Naive thymus-derived CD4-positive, alpha-beta T cell (primary cell): ENCODE measurements at regions of chr6 and their contacts with region 1.

Region 1: GRCh38 chr6:32838114-32838958 is at the start of gene TAP2:
- DNase-seq: peak; percentile 93 to 100 (median 97)
- ATAC-seq: peak; percentile 97
- H3K4me3 ChIP-seq: peak within 1 kb of the TSS; percentile 87
- H3K4me3 Mint-ChIP-seq: peak within 1 kb of the TSS; percentile 85 to 98 (median 93)
- H3K27ac ChIP-seq: peak within 1 kb of the TSS; percentile 97
- H3K27ac Mint-ChIP-seq: peak within 1 kb of the TSS; percentile 89 to 100 (median 99)
- H3K4me1 ChIP-seq: peaks cover 52 to 64% of the 10 kb centered on the region in 2 donors
- H3K4me1 Mint-ChIP-seq: peaks cover 71 to 92% (median 84%) of the 10 kb centered on the region in 7 donors
- H3K27me3 ChIP-seq: no peaks in the 10 kb centered on the region
- H3K27me3 Mint-ChIP-seq: no peaks in the 10 kb centered on the region
- total RNA-seq, gene TAP2: 84.3 to 243 (median 117) TPM

Region 2: DNA sequence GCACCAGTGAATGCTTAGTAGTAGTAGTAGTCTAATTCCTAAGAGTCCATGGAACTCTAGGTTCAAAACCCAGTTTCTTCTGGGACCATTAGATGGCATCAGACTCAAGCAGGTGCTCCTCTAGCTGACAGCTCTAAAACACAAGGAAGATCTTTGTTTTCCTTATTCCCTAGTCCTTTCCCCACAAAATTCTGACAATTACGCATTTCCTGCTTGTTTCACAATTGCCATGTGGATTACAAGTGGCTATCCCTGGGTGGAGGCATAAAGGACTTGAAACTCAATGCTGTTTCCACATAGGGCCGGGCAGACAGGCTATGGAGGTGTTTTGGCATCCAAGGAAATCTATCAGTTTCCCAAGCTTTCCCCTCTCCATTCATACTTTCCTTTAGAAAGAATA is 12.4 kb before region 1 on chr6:
- CTCF ChIA-PET with region 1: interaction called, 18 read pairs
- POLR2A ChIA-PET with region 1: interaction called, 6 read pairs
- intact Hi-C with region 1: no loop called
- DNase-seq: peak in 1 of 9 donors; percentile 14
- ATAC-seq: no peak
- H3K4me3 ChIP-seq: no peak overlapping the region
- H3K4me3 Mint-ChIP-seq: no peak overlapping the region
- H3K27ac ChIP-seq: no peak overlapping the region
- H3K27ac Mint-ChIP-seq: peak overlapping the region in 4 of 9 donors; percentile 13 to 43 (median 30)
- H3K4me1 ChIP-seq: no peaks in the 10 kb centered on the region
- H3K4me1 Mint-ChIP-seq: peaks cover 0 to 40% (median 4%) of the 10 kb centered on the region in 7 donors
- H3K27me3 ChIP-seq: no peaks in the 10 kb centered on the region
- H3K27me3 Mint-ChIP-seq: no peaks in the 10 kb centered on the region

Region 3: GRCh38 chr6:32853541-32854375 is 15.4 kb after region 1 on chr6 and contains the starts of genes PSMB9 and TAP1:
- CTCF ChIA-PET with region 1: interaction called, 241 read pairs
- POLR2A ChIA-PET with region 1: interaction called, 662 read pairs
- intact Hi-C with region 1: loop called (anchors 1 kb)
- DNase-seq: peak; percentile 92 to 97 (median 94)
- ATAC-seq: peak; percentile 92
- H3K4me3 ChIP-seq: peak within 1 kb of the TSS; percentile 91
- H3K4me3 Mint-ChIP-seq: peak within 1 kb of the TSS; percentile 96 to 100 (median 100)
- H3K27ac ChIP-seq: peak within 1 kb of the TSS; percentile 100
- H3K27ac Mint-ChIP-seq: peak within 1 kb of the TSS; percentile 97 to 100 (median 100)
- H3K4me1 ChIP-seq: peaks cover 45 to 57% of the 10 kb centered on the region in 2 donors
- H3K4me1 Mint-ChIP-seq: peaks cover 61 to 80% (median 72%) of the 10 kb centered on the region in 7 donors
- H3K27me3 ChIP-seq: no peaks in the 10 kb centered on the region
- H3K27me3 Mint-ChIP-seq: no peaks in the 10 kb centered on the region
- total RNA-seq, gene PSMB9: 70.3 to 452 (median 90.5) TPM
- total RNA-seq, gene TAP1: 92.1 to 500 (median 103) TPM

Region 4: GRCh38 chr6:32862725-32863124 is 24.4 kb after region 1 on chr6:
- CTCF ChIA-PET with region 1: interaction called, 241 read pairs
- POLR2A ChIA-PET with region 1: interaction called, 662 read pairs
- intact Hi-C with region 1: no loop called
- DNase-seq: no peak
- ATAC-seq: no peak
- H3K4me3 ChIP-seq: no peak overlapping the region
- H3K4me3 Mint-ChIP-seq: no peak overlapping the region
- H3K27ac ChIP-seq: no peak overlapping the region
- H3K27ac Mint-ChIP-seq: peak overlapping the region in 1 of 9 donors; percentile 13
- H3K4me1 ChIP-seq: peaks cover 5 to 14% of the 10 kb centered on the region in 2 donors
- H3K4me1 Mint-ChIP-seq: peaks cover 29 to 57% (median 52%) of the 10 kb centered on the region in 7 donors
- H3K27me3 ChIP-seq: no peaks in the 10 kb centered on the region
- H3K27me3 Mint-ChIP-seq: no peaks in the 10 kb centered on the region

Region 5: GRCh38 chr6:32894080-32895005 is 56.0 kb after region 1 on chr6:
- CTCF ChIA-PET with region 1: interaction called, 3 read pairs
- POLR2A ChIA-PET with region 1: interaction called, 5 read pairs
- intact Hi-C with region 1: loop called in 1 of 2 experiments (anchors 1 kb)
- DNase-seq: peak; percentile 89 to 98 (median 94)
- ATAC-seq: peak; percentile 99
- H3K4me3 ChIP-seq: peak overlapping the region; percentile 81
- H3K4me3 Mint-ChIP-seq: peak overlapping the region; percentile 91 to 100 (median 99)
- H3K27ac ChIP-seq: peak overlapping the region; percentile 78
- H3K27ac Mint-ChIP-seq: peak overlapping the region; percentile 78 to 97 (median 94)
- H3K4me1 ChIP-seq: peaks cover 12 to 13% of the 10 kb centered on the region in 2 donors
- H3K4me1 Mint-ChIP-seq: peaks cover 30 to 43% (median 36%) of the 10 kb centered on the region in 7 donors
- H3K27me3 ChIP-seq: no peaks in the 10 kb centered on the region
- H3K27me3 Mint-ChIP-seq: peaks cover 0 to 4% (median 0%) of the 10 kb centered on the region in 5 donors

Region 6: GRCh38 chr6:32933636-32934085 is 95.3 kb after region 1 on chr6:
- CTCF ChIA-PET with region 1: interaction called, 12 read pairs
- POLR2A ChIA-PET with region 1: no interaction called
- intact Hi-C with region 1: no loop called
- DNase-seq: peak; percentile 47 to 77 (median 67)
- ATAC-seq: peak; percentile 79
- H3K4me3 ChIP-seq: no peak overlapping the region
- H3K4me3 Mint-ChIP-seq: no peak overlapping the region
- H3K27ac ChIP-seq: no peak overlapping the region
- H3K27ac Mint-ChIP-seq: peak overlapping the region in 2 of 9 donors; percentile 32 to 45
- H3K4me1 ChIP-seq: no peaks in the 10 kb centered on the region
- H3K4me1 Mint-ChIP-seq: peaks cover 0 to 24% (median 6%) of the 10 kb centered on the region in 7 donors
- H3K27me3 ChIP-seq: no peaks in the 10 kb centered on the region
- H3K27me3 Mint-ChIP-seq: peaks cover 0 to 35% (median 0%) of the 10 kb centered on the region in 5 donors

Region 7: GRCh38 chr6:32940656-32941213 is 102.4 kb after region 1 on chr6 and contains the start of gene HLA-DMB:
- CTCF ChIA-PET with region 1: interaction called, 6 read pairs
- POLR2A ChIA-PET with region 1: interaction called, 12 read pairs
- intact Hi-C with region 1: no loop called
- DNase-seq: peak in 7 of 9 donors; percentile 64 to 80 (median 74)
- ATAC-seq: peak; percentile 86
- H3K4me3 ChIP-seq: peak within 1 kb of the TSS; percentile 66
- H3K4me3 Mint-ChIP-seq: peak within 1 kb of the TSS; percentile 85 to 97 (median 94)
- H3K27ac ChIP-seq: peak within 1 kb of the TSS; percentile 75
- H3K27ac Mint-ChIP-seq: peak within 1 kb of the TSS; percentile 95 to 98 (median 96)
- H3K4me1 ChIP-seq: peaks cover 50 to 55% of the 10 kb centered on the region in 2 donors
- H3K4me1 Mint-ChIP-seq: peaks cover 55 to 67% (median 62%) of the 10 kb centered on the region in 7 donors
- H3K27me3 ChIP-seq: no peaks in the 10 kb centered on the region
- H3K27me3 Mint-ChIP-seq: peaks cover 0 to 7% (median 0%) of the 10 kb centered on the region in 5 donors
- total RNA-seq, gene HLA-DMB: 7.8 to 82.5 (median 9.1) TPM

Region 8: DNA sequence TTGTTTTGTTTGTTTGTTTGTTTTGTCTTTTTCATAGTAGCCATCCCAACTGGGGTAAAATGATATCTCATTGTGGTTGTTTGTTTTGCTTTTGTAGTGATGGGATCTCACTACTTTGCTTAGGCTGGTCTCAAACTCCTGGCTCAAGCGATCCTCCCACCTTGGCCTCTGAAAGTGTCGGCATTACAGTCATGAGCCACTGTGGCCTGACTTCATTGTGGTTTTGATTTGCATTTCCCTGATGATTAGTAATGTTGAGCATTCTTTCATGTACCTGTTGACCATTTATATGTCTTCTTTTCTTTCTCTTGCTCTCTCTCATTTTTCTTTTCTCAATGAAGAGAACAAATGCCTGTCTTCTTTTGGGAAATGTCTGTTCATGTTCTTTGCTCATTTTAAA is 201.8 kb after region 1 on chr6:
- CTCF ChIA-PET with region 1: no interaction called
- POLR2A ChIA-PET with region 1: no interaction called
- intact Hi-C with region 1: no loop called
- DNase-seq: no peak
- ATAC-seq: no peak
- H3K4me3 ChIP-seq: no peak overlapping the region
- H3K4me3 Mint-ChIP-seq: no peak overlapping the region
- H3K27ac ChIP-seq: no peak overlapping the region
- H3K27ac Mint-ChIP-seq: no peak overlapping the region
- H3K4me1 ChIP-seq: no peaks in the 10 kb centered on the region
- H3K4me1 Mint-ChIP-seq: no peaks in the 10 kb centered on the region
- H3K27me3 ChIP-seq: no peaks in the 10 kb centered on the region
- H3K27me3 Mint-ChIP-seq: peaks cover 5 to 74% (median 15%) of the 10 kb centered on the region in 5 donors